Right cardiac atrium (tissue), 5 donors: ENCODE measurements at regions of chr1 and their contacts with region 1.

Region 1: GRCh38 chr1:31335007-31335406 is 37.9 kb downstream of the FABP3 start:
- DNase-seq: no peak
- ATAC-seq: no peak
- H3K4me3 ChIP-seq: no peak overlapping the region
- H3K27ac ChIP-seq: no peak overlapping the region
- H3K4me1 ChIP-seq: no peaks in the 10 kb centered on the region
- H3K27me3 ChIP-seq: no peaks in the 10 kb centered on the region

Region 2: GRCh38 chr1:31182352-31182751 is 152.7 kb before region 1 on chr1:
- intact Hi-C with region 1: loop called in 3 of 4 experiments (anchors 5 to 10 kb)
- DNase-seq: peak; percentile 81 to 90 (median 90)
- ATAC-seq: peak; percentile 86 to 92
- H3K4me3 ChIP-seq: peak overlapping the region; percentile 16
- H3K27ac ChIP-seq: no peak overlapping the region
- H3K4me1 ChIP-seq: no peaks in the 10 kb centered on the region
- H3K27me3 ChIP-seq: no peaks in the 10 kb centered on the region